Psoas muscle (tissue), 8 donors: ENCODE measurements at regions of chr12 and their contacts with region 1.

Region 1: DNA sequence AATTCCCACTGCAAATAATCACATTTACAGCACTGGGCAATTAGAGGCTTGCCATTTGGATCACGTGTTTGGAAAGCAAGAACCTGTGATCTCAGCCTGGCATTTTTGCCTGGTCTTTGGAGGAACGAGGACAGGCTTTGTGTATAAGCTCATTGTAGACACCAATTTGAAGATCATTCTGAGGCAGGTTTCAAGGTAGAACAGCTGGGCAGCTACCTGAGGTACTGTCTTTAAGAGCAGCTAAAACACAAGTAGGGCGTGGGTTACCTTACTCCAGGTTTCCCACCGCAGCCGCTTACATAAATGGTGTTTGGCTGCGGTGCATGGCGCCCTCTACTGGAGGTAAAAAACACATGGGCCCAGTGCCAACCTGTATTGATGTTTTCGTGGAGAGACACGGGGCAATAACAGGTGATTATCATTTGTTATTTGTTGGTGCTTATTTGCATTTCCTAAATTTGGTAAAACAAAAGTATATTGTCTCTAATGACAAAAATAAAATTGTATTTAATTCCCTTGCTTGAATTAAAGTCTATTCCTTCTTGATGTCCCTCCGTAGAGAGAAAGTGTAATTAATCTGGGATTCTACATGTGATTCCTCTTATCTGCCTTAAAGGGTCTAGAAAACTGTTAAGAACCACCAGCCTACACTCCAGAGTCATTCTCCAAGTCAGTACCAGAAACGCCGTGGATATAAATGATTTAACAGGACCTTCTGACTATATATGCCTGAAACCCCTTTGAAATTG is 69.7 kb downstream of the SVOP start:
- DNase-seq: peak; percentile 63 to 76
- ATAC-seq: peak; percentile 67 to 82 (median 73)
- H3K4me3 ChIP-seq: peak overlapping the region; percentile 33
- H3K27ac ChIP-seq: no peak overlapping the region
- H3K4me1 ChIP-seq: peaks cover 7% of the 10 kb centered on the region
- H3K27me3 ChIP-seq: no peaks in the 10 kb centered on the region
- CTCF ChIP-seq: peak; percentile 94

Region 2: GRCh38 chr12:108562348-108563135 is 388.6 kb before region 1 on chr12 and contains the start of gene ISCU:
- intact Hi-C with region 1: loop called in 1 of 2 experiments (anchors 5 kb)
- DNase-seq: peak; percentile 99
- ATAC-seq: peak; percentile 87 to 90 (median 88)
- H3K4me3 ChIP-seq: peak within 1 kb of the TSS; percentile 76
- H3K27ac ChIP-seq: peak within 1 kb of the TSS; percentile 97
- H3K4me1 ChIP-seq: peaks cover 55% of the 10 kb centered on the region
- H3K27me3 ChIP-seq: no peaks in the 10 kb centered on the region
- CTCF ChIP-seq: no peak
- total RNA-seq, gene ISCU: 148 to 225 (median 212) TPM

Region 3: GRCh38 chr12:108649669-108650068 is 301.5 kb before region 1 on chr12:
- intact Hi-C with region 1: no loop called
- DNase-seq: no peak
- ATAC-seq: no peak
- H3K4me3 ChIP-seq: no peak overlapping the region
- H3K27ac ChIP-seq: no peak overlapping the region
- H3K4me1 ChIP-seq: peaks cover 2% of the 10 kb centered on the region
- H3K27me3 ChIP-seq: no peaks in the 10 kb centered on the region
- CTCF ChIP-seq: no peak

Region 4: GRCh38 chr12:108803428-108804105 is 147.6 kb before region 1 on chr12:
- intact Hi-C with region 1: loop called in 1 of 2 experiments (anchors 5 kb)
- DNase-seq: peak in 1 of 2 donors; percentile 60
- ATAC-seq: peak; percentile 58 to 78 (median 70)
- H3K4me3 ChIP-seq: peak overlapping the region; percentile 47
- H3K27ac ChIP-seq: peak overlapping the region; percentile 91
- H3K4me1 ChIP-seq: peaks cover 58% of the 10 kb centered on the region
- H3K27me3 ChIP-seq: no peaks in the 10 kb centered on the region
- CTCF ChIP-seq: peak; percentile 97

Region 5: GRCh38 chr12:108861878-108862587 is 89.1 kb before region 1 on chr12:
- intact Hi-C with region 1: loop called (anchors 2 to 5 kb)
- DNase-seq: no peak
- ATAC-seq: no peak
- H3K4me3 ChIP-seq: no peak overlapping the region
- H3K27ac ChIP-seq: no peak overlapping the region
- H3K4me1 ChIP-seq: peaks cover 5% of the 10 kb centered on the region
- H3K27me3 ChIP-seq: no peaks in the 10 kb centered on the region
- CTCF ChIP-seq: no peak

Region 6: DNA sequence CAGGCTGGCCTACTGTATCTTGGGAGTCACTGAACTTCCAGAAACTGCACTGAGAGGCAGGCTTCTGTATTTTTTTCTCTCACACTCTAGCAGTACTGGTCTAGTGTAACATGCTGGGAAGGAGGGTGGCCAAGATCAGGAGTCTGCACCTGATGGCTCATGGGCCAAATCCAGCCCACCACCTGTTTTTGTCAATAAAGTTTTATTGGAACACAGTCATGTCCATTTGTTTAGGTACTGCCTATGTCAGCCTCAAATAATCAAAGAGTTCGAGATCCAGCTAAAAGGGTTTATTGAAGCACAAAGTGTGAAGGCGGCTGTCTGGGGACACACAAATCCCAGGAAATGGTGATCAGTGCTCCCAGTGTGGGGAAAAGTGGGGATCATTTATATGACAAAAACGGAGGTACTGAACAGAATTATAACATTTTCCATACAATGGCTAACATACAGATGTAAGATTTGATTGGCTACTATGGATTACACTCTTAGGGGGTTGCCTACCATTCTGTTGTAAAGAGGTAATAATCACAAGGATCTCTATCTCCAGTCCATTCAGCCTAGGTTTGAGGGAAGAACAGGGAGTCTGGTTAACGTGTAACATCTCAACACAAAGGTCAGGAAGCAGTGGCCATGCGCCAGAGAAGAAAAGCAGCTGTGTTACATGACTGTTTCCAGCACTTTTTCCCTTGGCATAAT is 114.1 kb after region 1 on chr12:
- intact Hi-C with region 1: no loop called
- DNase-seq: no peak
- ATAC-seq: no peak
- H3K4me3 ChIP-seq: no peak overlapping the region
- H3K27ac ChIP-seq: no peak overlapping the region
- H3K4me1 ChIP-seq: no peaks in the 10 kb centered on the region
- H3K27me3 ChIP-seq: no peaks in the 10 kb centered on the region
- CTCF ChIP-seq: no peak

Region 7: DNA sequence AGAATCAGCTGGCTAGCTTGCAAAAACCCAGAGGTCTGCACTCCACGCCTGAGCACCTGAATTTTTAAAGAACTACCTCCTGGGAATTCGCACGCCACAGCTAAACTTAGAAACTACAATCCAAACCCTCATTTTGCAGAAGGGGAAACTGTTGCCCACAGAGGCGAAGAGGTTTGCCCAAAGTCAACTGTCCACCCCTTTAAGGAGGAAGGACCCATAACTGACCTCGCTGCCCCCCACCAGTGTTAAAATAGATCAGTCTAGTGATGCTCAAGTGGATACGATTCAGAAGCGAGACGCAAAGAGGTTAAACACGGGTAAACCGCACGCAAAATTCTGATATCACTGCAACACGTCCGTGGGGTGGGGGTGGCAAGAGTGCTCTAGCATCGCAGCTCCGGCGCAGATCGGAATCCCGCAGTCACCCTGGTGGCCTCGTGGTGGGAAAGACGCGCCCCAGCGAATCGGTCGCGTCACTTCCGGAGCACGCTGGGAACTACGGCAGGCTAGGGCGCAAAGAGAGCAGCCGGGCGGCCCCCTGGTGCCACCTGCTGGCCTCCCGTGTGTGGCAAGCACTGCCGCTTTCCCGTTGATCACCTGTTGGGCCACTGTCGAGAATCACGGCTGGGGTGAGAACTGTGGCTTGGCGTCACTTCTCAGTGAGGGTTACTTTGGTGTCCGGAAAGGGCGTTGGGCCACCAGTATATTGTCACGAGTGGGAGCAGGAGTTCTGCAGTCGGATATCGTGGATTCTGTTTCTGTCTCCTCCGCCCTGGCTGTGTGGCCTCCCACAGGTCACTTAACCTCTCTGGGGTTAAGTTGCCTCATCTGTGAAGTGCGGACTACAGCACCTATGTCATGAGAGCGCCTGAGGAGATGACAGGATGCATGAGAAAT is 142.1 kb after region 1 on chr12 and contains the start of gene ALKBH2:
- intact Hi-C with region 1: loop called in 1 of 2 experiments (anchors 5 kb)
- DNase-seq: peak; percentile 96 to 97
- ATAC-seq: peak; percentile 84 to 85 (median 84)
- H3K4me3 ChIP-seq: peak within 1 kb of the TSS; percentile 75
- H3K27ac ChIP-seq: peak within 1 kb of the TSS; percentile 82
- H3K4me1 ChIP-seq: peaks cover 13% of the 10 kb centered on the region
- H3K27me3 ChIP-seq: no peaks in the 10 kb centered on the region
- CTCF ChIP-seq: peak; percentile 97
- total RNA-seq, gene ALKBH2: 7.3 to 25.3 (median 17.7) TPM